ENCODE measurements at regions of chr5 and their contacts with region 1.

Region 1: GRCh38 chr5:177370488-177371119 is 12.9 kb downstream of the RGS14 start:
- DNase-seq: peak in 2 of 3 donors; percentile 49 to 55
- H3K4me3 ChIP-seq: no peak overlapping the region
- H3K4me3 Mint-ChIP-seq: peak overlapping the region in 1 of 2 donors; percentile 30
- H3K27ac ChIP-seq: no peak overlapping the region
- H3K27ac Mint-ChIP-seq: no peak overlapping the region
- H3K4me1 ChIP-seq: peaks cover 24 to 44% of the 10 kb centered on the region in 2 donors
- H3K4me1 Mint-ChIP-seq: peaks cover 52% of the 10 kb centered on the region
- H3K27me3 ChIP-seq: no peaks in the 10 kb centered on the region
- H3K27me3 Mint-ChIP-seq: peaks cover 0 to 8% (median 0%) of the 10 kb centered on the region in 3 donors
- CTCF ChIP-seq: peak; percentile 42

Region 2: DNA sequence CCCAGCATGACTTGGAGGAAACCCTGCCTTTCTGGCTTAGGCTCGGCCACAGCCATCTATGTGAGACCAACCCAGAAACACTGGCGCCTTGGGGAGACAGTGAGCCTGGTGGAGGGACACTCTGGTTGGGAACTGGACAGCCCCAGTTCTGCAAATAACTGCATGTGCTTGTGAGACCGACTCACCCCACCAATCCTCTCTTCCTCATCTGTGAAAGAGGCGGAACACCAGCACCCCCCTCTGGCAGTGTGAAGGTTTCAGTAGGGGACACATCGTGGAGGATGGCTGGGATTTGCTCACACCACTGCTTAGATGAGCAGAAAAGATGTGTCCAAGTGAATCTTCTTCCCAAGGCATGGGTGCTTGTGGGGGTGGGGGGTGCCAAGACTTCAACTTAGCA is 699.3 kb after region 1 on chr5:
- intact Hi-C with region 1: loop called in 1 of 2 experiments (anchors 10 kb)
- DNase-seq: peak in 1 of 3 donors; percentile 14
- H3K4me3 ChIP-seq: no peak overlapping the region
- H3K4me3 Mint-ChIP-seq: no peak overlapping the region
- H3K27ac ChIP-seq: no peak overlapping the region
- H3K27ac Mint-ChIP-seq: no peak overlapping the region
- H3K4me1 ChIP-seq: no peaks in the 10 kb centered on the region
- H3K4me1 Mint-ChIP-seq: no peaks in the 10 kb centered on the region
- H3K27me3 ChIP-seq: no peaks in the 10 kb centered on the region
- H3K27me3 Mint-ChIP-seq: peaks cover 2 to 7% (median 5%) of the 10 kb centered on the region in 3 donors
- CTCF ChIP-seq: peak; percentile 13